Activated naive CD4-positive, alpha-beta T cell treated with anti-CD3 and anti-CD28 coated beads, Interleukin-2, amount 10 ng/mL, durations not matched to agents 7 days and 5 days (primary cell): ENCODE measurements at regions of chr17 and their contacts with region 1.

Region 1: DNA sequence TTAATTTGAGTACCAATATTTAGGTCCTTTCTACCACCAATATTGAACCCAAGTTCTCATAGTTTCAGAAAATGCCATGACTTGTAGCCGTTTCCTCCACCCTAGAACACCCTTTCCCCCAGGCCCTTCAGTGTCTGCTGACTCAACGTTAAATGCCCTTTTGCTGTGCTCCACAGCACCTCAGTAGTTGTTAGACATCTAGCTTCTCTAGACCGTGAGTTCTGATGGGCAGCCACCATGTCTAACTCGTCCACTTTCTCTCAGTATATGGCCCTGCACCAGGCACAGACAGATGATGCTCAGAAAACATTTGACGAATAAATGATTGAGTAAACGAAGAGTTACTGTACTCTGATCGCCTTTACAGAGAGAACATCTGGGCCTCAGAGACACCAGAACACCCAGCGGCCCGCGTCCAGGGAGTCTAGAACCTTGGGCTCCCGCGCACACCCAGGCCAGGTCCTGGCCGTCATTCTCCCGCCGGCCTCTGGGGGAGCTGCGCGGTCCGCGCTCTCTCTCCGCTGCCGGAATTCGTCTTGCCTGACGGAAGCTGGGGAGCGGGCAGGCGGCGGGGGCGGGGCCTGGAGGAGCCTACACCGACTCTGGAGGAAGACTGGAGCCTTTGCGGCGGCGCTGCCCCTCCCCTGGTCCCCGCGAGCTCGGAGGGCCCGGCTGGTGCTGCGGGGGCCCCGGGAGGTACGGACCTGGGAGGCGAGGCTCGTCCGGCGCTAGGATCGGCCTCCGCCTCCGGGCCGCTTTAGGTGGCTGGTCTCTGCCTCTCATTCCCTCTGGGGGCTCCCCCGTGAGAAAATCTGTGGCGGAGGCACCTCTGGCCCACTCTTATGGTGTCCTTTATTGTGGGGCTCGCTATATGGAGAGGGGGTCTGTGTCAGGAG is at the start of gene NKIRAS2:
- DNase-seq: peak; percentile 97
- H3K4me3 Mint-ChIP-seq: peak within 1 kb of the TSS; percentile 88
- H3K27ac Mint-ChIP-seq: peak within 1 kb of the TSS; percentile 51
- H3K4me1 Mint-ChIP-seq: peaks cover 58% of the 10 kb centered on the region
- H3K27me3 Mint-ChIP-seq: no peaks in the 10 kb centered on the region

Region 2: GRCh38 chr17:42042598-42043319 is 23.0 kb after region 1 on chr17:
- CTCF ChIA-PET with region 1: no interaction called
- DNase-seq: no peak
- H3K4me3 Mint-ChIP-seq: no peak overlapping the region
- H3K27ac Mint-ChIP-seq: no peak overlapping the region
- H3K4me1 Mint-ChIP-seq: no peaks in the 10 kb centered on the region
- H3K27me3 Mint-ChIP-seq: peaks cover 53% of the 10 kb centered on the region

Region 3: DNA sequence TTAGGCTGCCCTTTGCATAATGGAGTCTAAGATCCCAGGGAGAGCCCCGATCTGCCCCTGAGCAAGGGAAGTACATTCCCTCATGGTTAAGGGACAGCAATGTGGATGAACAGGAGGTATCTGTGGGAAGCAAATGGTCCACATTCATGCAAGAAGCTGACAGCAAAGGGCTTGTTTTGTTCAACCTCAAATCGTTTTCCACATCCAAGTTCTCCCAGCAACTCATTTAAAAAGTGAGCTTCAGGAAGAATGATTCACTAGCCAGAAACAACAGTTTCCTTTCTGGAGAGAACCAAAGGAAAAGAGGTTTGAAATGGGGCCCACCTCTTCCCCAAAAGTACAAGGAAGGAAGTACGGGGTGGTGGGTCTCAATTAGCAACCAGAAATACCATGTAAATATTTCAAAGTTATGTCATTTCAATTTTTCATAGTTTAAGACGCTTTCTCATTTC is 112.2 kb after region 1 on chr17:
- CTCF ChIA-PET with region 1: interaction called, 17 read pairs
- DNase-seq: no peak
- H3K4me3 Mint-ChIP-seq: no peak overlapping the region
- H3K27ac Mint-ChIP-seq: peak overlapping the region; percentile 82
- H3K4me1 Mint-ChIP-seq: peaks cover 55% of the 10 kb centered on the region
- H3K27me3 Mint-ChIP-seq: no peaks in the 10 kb centered on the region

Region 4: DNA sequence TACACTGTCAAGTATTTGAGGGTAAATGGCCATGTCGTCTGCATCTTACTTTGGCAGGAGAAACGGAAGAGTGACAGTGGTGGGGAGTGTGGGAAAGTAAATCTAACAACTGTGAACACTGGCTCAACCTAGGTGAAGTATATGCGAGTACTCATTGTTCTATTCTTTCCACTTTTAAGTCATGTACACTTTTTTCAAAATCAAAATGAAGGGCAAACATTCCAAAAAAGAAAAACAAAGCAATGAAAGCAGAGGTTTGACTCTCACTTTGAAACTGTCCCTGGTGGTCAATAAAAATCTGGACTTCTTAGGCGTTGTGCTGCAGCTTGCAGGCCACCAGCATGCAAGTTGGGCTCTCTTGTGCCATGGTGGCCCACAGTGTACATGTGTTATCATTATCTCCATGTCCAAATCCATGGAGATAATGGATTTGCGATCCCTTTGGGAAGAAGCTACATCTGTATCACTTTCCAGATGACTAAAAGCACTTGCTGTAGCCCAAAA is 223.8 kb after region 1 on chr17:
- CTCF ChIA-PET with region 1: no interaction called
- DNase-seq: no peak
- H3K4me3 Mint-ChIP-seq: no peak overlapping the region
- H3K27ac Mint-ChIP-seq: no peak overlapping the region
- H3K4me1 Mint-ChIP-seq: peaks cover 36% of the 10 kb centered on the region
- H3K27me3 Mint-ChIP-seq: no peaks in the 10 kb centered on the region